Posterior vena cava (tissue), 2 donors: ENCODE measurements at regions of chr3 and their contacts with region 1.

Region 1: DNA sequence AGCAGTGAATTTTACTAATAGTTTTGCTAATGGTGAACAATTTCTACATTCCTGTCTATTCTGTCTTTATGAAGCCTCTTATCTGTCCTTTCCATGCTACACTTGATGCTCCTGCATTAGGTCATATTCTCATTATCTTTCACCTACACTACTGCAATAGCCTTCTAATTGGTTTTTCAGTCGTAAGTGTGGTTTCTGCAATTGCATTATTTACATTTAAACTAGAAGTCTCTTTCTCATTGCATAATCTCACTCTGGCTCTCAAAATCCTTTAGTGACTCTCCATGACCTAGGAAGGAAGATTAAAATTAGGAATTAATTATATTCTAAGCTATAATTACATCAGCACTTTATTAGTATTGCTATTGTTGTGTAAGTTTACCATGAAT is 686.5 kb downstream of the IGSF11 start:
- DNase-seq: no peak

Region 2: GRCh38 chr3:117939425-117940027 is 408.6 kb before region 1 on chr3:
- intact Hi-C with region 1: loop called in 1 of 2 experiments (anchors 5 kb)
- DNase-seq: no peak